CD8-positive, alpha-beta memory T cell (primary cell): ENCODE measurements at regions of chr2 and their contacts with region 1.

Region 1: GRCh38 chr2:216519154-216519762 is 20.6 kb downstream of the RPL37A start:
- DNase-seq: peak in 4 of 5 donors; percentile 10 to 47 (median 31)
- H3K4me3 ChIP-seq: no peak overlapping the region
- H3K4me3 Mint-ChIP-seq: no peak overlapping the region
- H3K27ac ChIP-seq: no peak overlapping the region
- H3K27ac Mint-ChIP-seq: no peak overlapping the region
- H3K4me1 ChIP-seq: no peaks in the 10 kb centered on the region
- H3K4me1 Mint-ChIP-seq: no peaks in the 10 kb centered on the region
- H3K27me3 ChIP-seq: no peaks in the 10 kb centered on the region
- H3K27me3 Mint-ChIP-seq: no peaks in the 10 kb centered on the region

Region 2: DNA sequence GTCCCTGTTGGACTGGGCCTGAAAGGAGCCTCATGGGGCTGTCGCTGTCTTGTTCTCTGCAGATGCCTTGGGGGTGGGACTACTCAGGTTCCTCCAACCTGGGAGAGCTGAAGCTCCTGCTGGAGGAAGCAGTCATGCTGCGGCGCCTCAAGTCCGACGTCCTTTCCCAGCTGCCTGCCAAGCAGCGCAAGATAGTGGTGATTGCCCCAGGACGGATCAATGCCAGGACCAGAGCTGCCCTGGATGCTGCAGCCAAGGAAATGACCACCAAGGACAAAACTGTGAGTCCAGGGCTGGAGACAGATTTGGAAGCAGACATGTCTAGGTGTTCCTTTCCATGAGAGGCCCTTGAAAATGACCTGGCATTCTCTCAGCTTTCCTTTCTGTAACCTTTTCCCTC is 68.5 kb before region 1 on chr2:
- CTCF ChIA-PET with region 1: no interaction called
- POLR2A ChIA-PET with region 1: no interaction called
- DNase-seq: no peak
- H3K4me3 ChIP-seq: no peak overlapping the region
- H3K4me3 Mint-ChIP-seq: no peak overlapping the region
- H3K27ac ChIP-seq: no peak overlapping the region
- H3K27ac Mint-ChIP-seq: no peak overlapping the region
- H3K4me1 ChIP-seq: no peaks in the 10 kb centered on the region
- H3K4me1 Mint-ChIP-seq: no peaks in the 10 kb centered on the region
- H3K27me3 ChIP-seq: no peaks in the 10 kb centered on the region
- H3K27me3 Mint-ChIP-seq: no peaks in the 10 kb centered on the region

Region 3: DNA sequence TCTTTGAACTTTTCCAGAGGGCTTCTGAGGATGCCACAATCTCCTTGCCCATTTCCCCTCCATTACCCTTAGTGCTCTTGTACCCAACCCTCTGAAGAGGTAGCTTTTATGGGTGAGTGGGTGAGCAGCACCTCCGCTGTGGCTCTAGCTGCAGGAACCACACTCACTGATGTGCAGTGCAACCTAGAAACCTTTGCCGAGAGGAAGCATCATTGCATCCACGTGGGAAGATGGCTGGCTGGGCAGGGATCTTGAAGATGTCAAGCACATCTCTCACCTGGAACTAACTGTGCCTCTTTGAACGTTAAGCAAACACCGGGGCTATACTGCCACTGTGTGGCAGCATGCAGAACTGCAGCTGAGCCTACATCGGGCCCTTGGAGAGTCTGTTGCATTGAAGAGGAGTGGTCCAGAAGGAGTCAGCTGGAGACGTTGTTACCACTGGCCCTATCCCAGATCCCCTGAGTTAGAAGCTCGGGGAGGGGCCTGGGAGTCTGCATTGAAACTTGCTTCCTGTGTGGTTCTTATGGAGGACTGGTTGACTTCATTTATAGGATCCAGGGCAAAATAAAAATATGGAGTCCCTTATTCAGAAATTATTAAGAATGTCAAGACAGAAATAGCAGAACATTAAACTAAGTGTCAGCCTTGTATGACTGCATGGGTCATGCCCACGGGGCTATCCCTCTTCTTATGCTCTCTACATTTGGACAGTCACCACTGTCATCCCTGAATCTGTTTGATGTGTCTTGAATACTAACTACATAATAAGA is 147.4 kb after region 1 on chr2:
- CTCF ChIA-PET with region 1: interaction called, 15 read pairs
- POLR2A ChIA-PET with region 1: no interaction called
- DNase-seq: peak; percentile 38 to 72 (median 56)
- H3K4me3 ChIP-seq: no peak overlapping the region
- H3K4me3 Mint-ChIP-seq: no peak overlapping the region
- H3K27ac ChIP-seq: no peak overlapping the region
- H3K27ac Mint-ChIP-seq: no peak overlapping the region
- H3K4me1 ChIP-seq: no peaks in the 10 kb centered on the region
- H3K4me1 Mint-ChIP-seq: no peaks in the 10 kb centered on the region
- H3K27me3 ChIP-seq: no peaks in the 10 kb centered on the region
- H3K27me3 Mint-ChIP-seq: peaks cover 22 to 24% of the 10 kb centered on the region in 2 donors